Activated B cell treated with CpG ODN at 0.5 μM for 24 hours (primary cell): ENCODE measurements at regions of chr6 and their contacts with region 1.

Region 1: GRCh38 chr6:36678518-36679027 is at the start of gene CDKN1A:
- DNase-seq: peak; percentile 80
- ATAC-seq: peak; percentile 54
- H3K4me3 Mint-ChIP-seq: peak within 1 kb of the TSS; percentile 94
- H3K27ac Mint-ChIP-seq: peak within 1 kb of the TSS; percentile 94
- H3K4me1 Mint-ChIP-seq: peaks cover 44% of the 10 kb centered on the region
- H3K27me3 Mint-ChIP-seq: no peaks in the 10 kb centered on the region
- CTCF ChIP-seq: no peak
- total RNA-seq, gene CDKN1A: 46.9 and 50.4 TPM in 2 replicates

Region 2: GRCh38 chr6:36423101-36423824 is 255.3 kb before region 1 on chr6:
- CTCF ChIA-PET with region 1: interaction called, 3 read pairs
- POLR2A ChIA-PET with region 1: no interaction called
- intact Hi-C with region 1: loop called (anchors 1 kb)
- DNase-seq: peak; percentile 91
- ATAC-seq: peak; percentile 95
- H3K4me3 Mint-ChIP-seq: peak overlapping the region; percentile 94
- H3K27ac Mint-ChIP-seq: peak overlapping the region; percentile 89
- H3K4me1 Mint-ChIP-seq: peaks cover 16% of the 10 kb centered on the region
- H3K27me3 Mint-ChIP-seq: no peaks in the 10 kb centered on the region
- CTCF ChIP-seq: no peak

Region 3: DNA sequence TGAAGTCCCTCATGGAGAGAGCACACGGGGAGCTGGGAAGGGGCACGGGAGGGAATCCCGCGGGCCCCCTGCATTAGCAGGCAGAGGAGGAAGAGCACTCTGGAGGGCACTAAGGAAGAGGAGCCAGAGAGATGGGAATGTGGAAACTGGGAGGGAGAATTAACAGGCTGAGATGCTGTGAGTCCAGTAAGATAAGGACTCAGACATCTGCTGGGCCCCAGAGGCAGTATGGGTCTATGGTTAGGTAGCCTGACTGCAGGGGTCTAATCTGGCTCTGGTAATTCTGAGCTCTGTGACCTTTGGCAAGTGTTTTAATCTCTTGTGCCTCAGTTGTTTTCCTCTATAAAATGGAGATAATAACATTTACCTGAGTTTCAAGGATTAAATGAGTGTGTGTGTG is 100.1 kb before region 1 on chr6:
- CTCF ChIA-PET with region 1: no interaction called
- POLR2A ChIA-PET with region 1: no interaction called
- intact Hi-C with region 1: no loop called
- DNase-seq: no peak
- ATAC-seq: no peak
- H3K4me3 Mint-ChIP-seq: no peak overlapping the region
- H3K27ac Mint-ChIP-seq: no peak overlapping the region
- H3K4me1 Mint-ChIP-seq: peaks cover 4% of the 10 kb centered on the region
- H3K27me3 Mint-ChIP-seq: no peaks in the 10 kb centered on the region
- CTCF ChIP-seq: no peak

Region 4: GRCh38 chr6:36594029-36594815 is 84.4 kb before region 1 on chr6 and contains the start of gene SRSF3:
- CTCF ChIA-PET with region 1: no interaction called
- POLR2A ChIA-PET with region 1: interaction called, 70 read pairs
- intact Hi-C with region 1: loop called (anchors 1 kb)
- DNase-seq: peak; percentile 87
- ATAC-seq: peak; percentile 91
- H3K4me3 Mint-ChIP-seq: peak within 1 kb of the TSS; percentile 96
- H3K27ac Mint-ChIP-seq: peak within 1 kb of the TSS; percentile 99
- H3K4me1 Mint-ChIP-seq: peaks cover 51% of the 10 kb centered on the region
- H3K27me3 Mint-ChIP-seq: no peaks in the 10 kb centered on the region
- CTCF ChIP-seq: no peak
- total RNA-seq, gene SRSF3: 421 and 494 TPM in 2 replicates

Region 5: GRCh38 chr6:36650848-36651478 is 27.6 kb before region 1 on chr6:
- CTCF ChIA-PET with region 1: interaction called, 4 read pairs
- POLR2A ChIA-PET with region 1: interaction called, 5 read pairs
- intact Hi-C with region 1: loop called (anchors 2 kb)
- DNase-seq: no peak
- ATAC-seq: peak; percentile 89
- H3K4me3 Mint-ChIP-seq: no peak overlapping the region
- H3K27ac Mint-ChIP-seq: peak overlapping the region; percentile 76
- H3K4me1 Mint-ChIP-seq: peaks cover 33% of the 10 kb centered on the region
- H3K27me3 Mint-ChIP-seq: peaks cover 2% of the 10 kb centered on the region
- CTCF ChIP-seq: no peak

Region 6: DNA sequence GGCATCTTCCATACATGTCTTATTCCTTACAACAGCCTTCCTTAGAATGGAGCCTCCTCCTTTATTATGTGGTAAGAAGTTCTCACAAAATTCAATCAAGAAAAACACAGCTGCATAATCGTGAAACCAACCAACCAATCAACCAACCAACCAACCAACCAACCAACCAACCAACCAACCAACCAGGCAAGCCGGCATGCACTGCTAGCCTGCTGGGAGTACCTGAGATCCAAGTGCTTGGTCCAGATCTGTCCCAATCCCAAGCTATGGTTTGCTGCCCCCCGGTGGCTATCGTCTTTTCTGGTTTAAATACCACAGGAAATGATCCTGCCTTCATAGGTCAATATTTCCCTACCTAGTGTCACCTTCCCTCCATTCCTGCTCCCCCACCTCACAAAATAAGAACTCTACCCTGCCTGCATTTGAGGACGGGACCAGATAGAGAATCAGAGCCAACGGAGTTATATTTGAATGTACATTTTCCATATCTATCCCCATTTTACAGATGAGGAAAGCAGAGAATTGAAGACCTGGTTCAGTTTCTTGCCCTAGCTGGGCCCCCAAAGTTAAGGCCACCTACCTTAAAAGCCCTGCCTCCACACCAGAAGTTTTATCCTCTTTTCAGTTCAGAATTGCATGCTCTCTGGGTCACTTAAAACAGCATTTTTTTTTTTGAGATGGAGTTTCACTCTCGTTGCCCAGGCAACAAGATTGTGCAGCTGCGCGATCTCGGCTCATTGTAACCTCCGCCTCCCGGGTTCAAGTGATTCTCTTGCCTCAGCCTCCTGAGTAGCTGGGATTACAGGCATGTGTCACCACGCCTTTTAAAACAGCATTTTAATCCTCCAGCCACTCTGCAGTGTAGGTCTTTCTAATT is 46.2 kb after region 1 on chr6:
- CTCF ChIA-PET with region 1: interaction called, 5 read pairs
- POLR2A ChIA-PET with region 1: interaction called, 7 read pairs
- intact Hi-C with region 1: loop called (anchors 1 kb)
- DNase-seq: no peak
- ATAC-seq: peak; percentile 14
- H3K4me3 Mint-ChIP-seq: no peak overlapping the region
- H3K27ac Mint-ChIP-seq: peak overlapping the region; percentile 25
- H3K4me1 Mint-ChIP-seq: peaks cover 57% of the 10 kb centered on the region
- H3K27me3 Mint-ChIP-seq: no peaks in the 10 kb centered on the region
- CTCF ChIP-seq: no peak

Region 7: GRCh38 chr6:36759148-36759759 is 80.7 kb after region 1 on chr6:
- CTCF ChIA-PET with region 1: interaction called, 44 read pairs
- POLR2A ChIA-PET with region 1: interaction called, 226 read pairs
- intact Hi-C with region 1: loop called (anchors 1 kb)
- DNase-seq: peak; percentile 79
- ATAC-seq: peak; percentile 45
- H3K4me3 Mint-ChIP-seq: peak overlapping the region; percentile 63
- H3K27ac Mint-ChIP-seq: peak overlapping the region; percentile 97
- H3K4me1 Mint-ChIP-seq: peaks cover 56% of the 10 kb centered on the region
- H3K27me3 Mint-ChIP-seq: no peaks in the 10 kb centered on the region
- CTCF ChIP-seq: no peak

Region 8: DNA sequence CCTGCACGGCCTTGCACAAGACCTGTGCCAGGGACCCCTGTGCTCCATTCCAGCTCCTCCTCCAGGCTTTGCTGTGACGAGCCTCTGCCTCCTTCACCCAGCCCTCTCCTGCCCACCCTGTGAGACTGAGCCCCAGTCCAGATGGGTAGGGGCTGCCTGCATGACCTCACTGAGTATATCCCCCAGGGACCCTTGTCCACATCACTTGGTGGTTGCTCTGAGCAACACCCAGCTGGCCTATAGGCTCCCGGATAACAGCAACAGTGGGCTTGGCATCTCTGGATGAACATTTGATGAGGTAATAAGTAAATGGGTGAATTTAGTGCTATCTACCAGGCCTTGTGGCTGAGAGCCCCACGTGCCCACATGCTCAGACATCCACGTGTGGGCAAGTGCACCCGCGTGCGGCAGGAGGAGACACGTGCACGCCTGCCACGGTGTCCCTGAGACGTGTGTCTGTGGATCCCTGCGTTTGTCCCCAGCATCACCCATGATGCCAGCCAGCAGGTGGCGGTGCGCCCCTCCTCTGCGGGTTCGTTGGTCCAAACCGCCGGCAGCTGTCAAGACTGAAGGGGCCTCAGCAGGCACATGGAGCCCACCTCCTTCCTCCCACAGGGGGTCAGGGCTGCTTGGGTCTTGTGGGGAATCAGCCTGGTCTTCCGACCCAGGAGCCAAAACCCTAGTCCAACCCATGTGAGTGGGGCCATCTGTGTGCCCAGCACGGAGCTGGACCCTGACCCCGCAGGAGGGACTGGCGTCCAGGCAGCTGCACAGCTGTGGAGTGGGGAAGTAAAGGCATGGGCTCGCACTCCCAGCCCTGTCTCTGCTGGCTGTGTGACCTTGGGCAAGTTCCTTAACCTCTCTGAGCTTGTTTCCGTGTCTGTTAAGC is 372.8 kb after region 1 on chr6:
- CTCF ChIA-PET with region 1: no interaction called
- POLR2A ChIA-PET with region 1: interaction called, 4 read pairs
- intact Hi-C with region 1: loop called (anchors 2 kb)
- DNase-seq: peak; percentile 89
- ATAC-seq: peak; percentile 44
- H3K4me3 Mint-ChIP-seq: peak overlapping the region; percentile 64
- H3K27ac Mint-ChIP-seq: peak overlapping the region; percentile 98
- H3K4me1 Mint-ChIP-seq: peaks cover 58% of the 10 kb centered on the region
- H3K27me3 Mint-ChIP-seq: peaks cover 1% of the 10 kb centered on the region
- CTCF ChIP-seq: no peak